ENCODE measurements at regions of chr5 and their contacts with region 1.

Region 1: GRCh38 chr5:40679155-40679913 is 381 bp upstream of the PTGER4 start:
- DNase-seq: peak; percentile 34
- ATAC-seq: peak; percentile 87
- H3K4me3 ChIP-seq: peak overlapping the region; percentile 77
- H3K27ac ChIP-seq: no peak overlapping the region
- H3K4me1 ChIP-seq: peaks cover 8% of the 10 kb centered on the region
- H3K27me3 ChIP-seq: peaks cover 5 to 19% of the 10 kb centered on the region in 2 experiments; a peak in 3 of 4 replicates
- CTCF ChIP-seq: no peak
- EP300 ChIP-seq: no peak
- POLR2A ChIP-seq: no peak
- RAD21 ChIP-seq: no peak

Region 2: DNA sequence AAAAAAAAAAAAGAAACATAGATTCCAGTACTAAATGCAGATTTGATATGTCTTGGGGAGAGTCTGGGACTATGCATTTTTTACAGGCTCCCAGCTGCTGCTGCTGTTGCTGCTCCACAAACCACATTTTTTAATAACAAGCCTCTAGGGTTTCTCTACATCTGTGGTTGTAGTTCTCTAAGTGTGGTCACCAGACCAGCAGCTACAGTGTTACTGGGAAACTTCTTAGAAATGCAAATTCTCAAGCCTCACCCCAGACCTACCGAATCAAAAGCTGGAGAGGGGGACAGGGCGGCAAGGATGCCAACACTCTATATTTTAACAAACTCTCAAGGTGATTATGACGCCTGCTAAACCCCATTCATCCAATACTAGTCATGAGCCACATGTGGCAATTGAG is 293.0 kb before region 1 on chr5:
- CTCF ChIA-PET with region 1: interaction called, 3 read pairs
- POLR2A ChIA-PET with region 1: no interaction called
- RAD21 ChIA-PET with region 1: no interaction called
- SMC1A ChIA-PET with region 1: interaction called, 4 read pairs
- in situ Hi-C with region 1: no loop called
- intact Hi-C with region 1: loop called (anchors 5 kb)
- DNase-seq: peak; percentile 62
- ATAC-seq: peak; percentile 89
- H3K4me3 ChIP-seq: no peak overlapping the region
- H3K27ac ChIP-seq: no peak overlapping the region
- H3K4me1 ChIP-seq: peaks cover 26% of the 10 kb centered on the region
- H3K27me3 ChIP-seq: no peaks in the 10 kb centered on the region
- CTCF ChIP-seq: no peak
- EP300 ChIP-seq: no peak
- POLR2A ChIP-seq: no peak
- RAD21 ChIP-seq: no peak

Region 3: GRCh38 chr5:40578501-40579451 is 100.6 kb before region 1 on chr5:
- CTCF ChIA-PET with region 1: no interaction called
- POLR2A ChIA-PET with region 1: no interaction called
- RAD21 ChIA-PET with region 1: no interaction called
- SMC1A ChIA-PET with region 1: no interaction called
- in situ Hi-C with region 1: no loop called
- intact Hi-C with region 1: loop called (anchors 5 kb)
- DNase-seq: peak; percentile 76
- ATAC-seq: peak; percentile 97
- H3K4me3 ChIP-seq: no peak overlapping the region
- H3K27ac ChIP-seq: no peak overlapping the region
- H3K4me1 ChIP-seq: peaks cover 11% of the 10 kb centered on the region; the same call in 1 of the 2 replicates
- H3K27me3 ChIP-seq: no peaks in the 10 kb centered on the region
- CTCF ChIP-seq: no peak
- EP300 ChIP-seq: peak; percentile 47 to 81; a peak in 2 of 4 replicates
- POLR2A ChIP-seq: no peak
- RAD21 ChIP-seq: peak; percentile 25; the same call in 1 of the 2 replicates

Region 4: GRCh38 chr5:40615586-40616170 is 63.7 kb before region 1 on chr5:
- CTCF ChIA-PET with region 1: no interaction called
- POLR2A ChIA-PET with region 1: no interaction called
- RAD21 ChIA-PET with region 1: no interaction called
- SMC1A ChIA-PET with region 1: no interaction called
- in situ Hi-C with region 1: no loop called
- intact Hi-C with region 1: no loop called
- DNase-seq: no peak
- ATAC-seq: no peak; the same call in 1 of the 3 replicates
- H3K4me3 ChIP-seq: no peak overlapping the region
- H3K27ac ChIP-seq: no peak overlapping the region
- H3K4me1 ChIP-seq: no peaks in the 10 kb centered on the region
- H3K27me3 ChIP-seq: no peaks in the 10 kb centered on the region
- CTCF ChIP-seq: no peak
- EP300 ChIP-seq: no peak
- POLR2A ChIP-seq: no peak
- RAD21 ChIP-seq: no peak

Region 5: GRCh38 chr5:40736103-40736875 is 57.0 kb after region 1 on chr5:
- CTCF ChIA-PET with region 1: interaction called, 10 read pairs
- POLR2A ChIA-PET with region 1: no interaction called
- RAD21 ChIA-PET with region 1: no interaction called
- SMC1A ChIA-PET with region 1: no interaction called
- in situ Hi-C with region 1: no loop called
- intact Hi-C with region 1: no loop called
- DNase-seq: peak; percentile 37
- ATAC-seq: peak; percentile 89
- H3K4me3 ChIP-seq: no peak overlapping the region
- H3K27ac ChIP-seq: no peak overlapping the region
- H3K4me1 ChIP-seq: no peaks in the 10 kb centered on the region
- H3K27me3 ChIP-seq: no peaks in the 10 kb centered on the region
- CTCF ChIP-seq: peak; percentile 62 to 76 (median 63)
- EP300 ChIP-seq: no peak
- POLR2A ChIP-seq: no peak
- RAD21 ChIP-seq: peak; percentile 78

Region 6: DNA sequence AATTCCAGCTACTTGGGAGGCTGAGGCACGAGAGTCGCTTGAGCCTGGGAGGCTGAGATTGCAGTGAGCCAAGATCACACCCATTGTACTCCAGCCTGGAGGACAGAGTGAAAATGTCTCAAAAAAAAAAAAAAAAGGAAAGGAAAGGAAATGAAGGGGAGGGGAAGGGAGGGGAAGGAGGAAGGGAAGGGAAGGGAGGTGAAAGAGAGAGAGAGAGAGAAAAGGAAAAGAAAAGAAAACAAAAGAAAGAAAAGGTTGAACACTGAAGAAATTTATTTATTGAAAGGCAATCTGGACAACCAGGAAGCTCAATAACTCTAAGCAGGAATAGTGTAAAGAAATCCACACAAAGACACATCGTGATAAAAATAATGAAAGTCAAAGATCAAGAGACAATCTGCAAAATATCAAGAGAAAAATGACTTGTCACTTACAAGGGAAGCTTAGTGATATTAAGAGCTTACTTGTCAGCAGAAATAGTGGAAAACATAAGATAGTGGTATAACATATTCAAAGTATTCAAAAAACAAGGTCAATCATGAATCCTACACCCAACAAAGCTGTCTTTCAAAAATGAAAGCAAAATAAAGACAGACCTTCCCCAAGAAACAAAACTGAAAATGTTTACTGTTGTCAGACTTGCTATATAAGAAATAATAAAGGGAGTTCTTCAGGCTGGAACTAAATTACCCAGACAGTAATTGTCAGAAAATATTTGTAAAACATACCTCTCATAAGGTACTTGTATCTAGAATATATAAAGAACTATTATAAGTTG is 1213.9 kb after region 1 on chr5:
- CTCF ChIA-PET with region 1: no interaction called
- POLR2A ChIA-PET with region 1: no interaction called
- RAD21 ChIA-PET with region 1: no interaction called
- SMC1A ChIA-PET with region 1: no interaction called
- in situ Hi-C with region 1: no loop called
- intact Hi-C with region 1: no loop called
- DNase-seq: no peak
- ATAC-seq: peak; percentile 70
- H3K4me3 ChIP-seq: no peak overlapping the region
- H3K27ac ChIP-seq: peak overlapping the region; percentile 18; the same call in 1 of the 2 replicates
- H3K4me1 ChIP-seq: 0 out of 2 replicates have a peak, but pooled peaks cover 6% of the 10 kb centered on the region
- H3K27me3 ChIP-seq: no peaks in the 10 kb centered on the region
- CTCF ChIP-seq: no peak
- EP300 ChIP-seq: no peak
- POLR2A ChIP-seq: no peak
- RAD21 ChIP-seq: no peak